PC-9 (cell line): ENCODE measurements at regions of chr15 and their contacts with region 1.

Region 1: DNA sequence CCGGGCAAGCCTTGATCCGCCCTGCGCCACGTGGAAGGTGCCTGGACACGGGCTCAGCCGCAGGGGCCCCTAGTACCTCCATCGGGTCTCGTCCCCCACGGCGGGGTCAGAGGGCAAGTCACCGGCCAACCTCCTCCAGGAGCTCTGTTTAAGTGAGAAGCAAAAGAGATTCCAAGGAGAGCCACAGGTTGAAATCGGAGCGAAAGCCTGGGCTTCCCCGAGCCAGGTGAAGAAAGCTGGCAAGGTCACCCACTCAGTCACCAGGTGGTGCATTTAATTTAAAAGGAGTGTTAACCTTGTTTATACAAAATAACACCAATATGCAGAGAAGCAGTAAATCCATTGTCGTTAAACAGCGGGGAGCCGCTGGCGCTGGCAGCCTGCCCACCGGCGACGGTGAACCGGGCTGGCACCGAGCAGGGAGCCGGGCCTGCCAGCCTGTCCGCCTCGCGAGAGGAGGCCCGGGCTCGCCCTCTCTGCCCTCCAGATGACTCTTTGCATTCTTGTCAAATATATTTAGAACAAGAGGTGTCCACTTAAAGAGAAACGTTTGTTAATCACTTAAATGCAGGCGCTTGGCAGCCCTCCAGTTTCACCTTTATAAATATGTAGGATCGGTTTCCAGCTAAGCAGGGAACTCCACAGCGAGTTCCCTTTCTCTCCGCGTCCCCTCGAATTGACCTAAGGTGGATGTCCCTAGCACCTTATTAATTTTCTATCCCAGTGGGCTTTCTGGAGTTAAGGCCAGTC is 277.3 kb upstream of the NR2F2 start:
- DNase-seq: peak; percentile 79 to 84
- H3K4me3 ChIP-seq: peak overlapping the region; percentile 68
- H3K27ac ChIP-seq: peak overlapping the region; percentile 92
- H3K4me1 ChIP-seq: peaks cover 53% of the 10 kb centered on the region
- H3K27me3 ChIP-seq: no peaks in the 10 kb centered on the region
- CTCF ChIP-seq: no peak

Region 2: GRCh38 chr15:95635666-95636065 is 417.5 kb before region 1 on chr15:
- CTCF ChIA-PET with region 1: interaction called, 11 read pairs
- POLR2A ChIA-PET with region 1: no interaction called
- intact Hi-C with region 1: no loop called
- DNase-seq: no peak
- H3K4me3 ChIP-seq: no peak overlapping the region
- H3K27ac ChIP-seq: peak overlapping the region; percentile 71
- H3K4me1 ChIP-seq: peaks cover 13% of the 10 kb centered on the region
- H3K27me3 ChIP-seq: no peaks in the 10 kb centered on the region
- CTCF ChIP-seq: no peak

Region 3: DNA sequence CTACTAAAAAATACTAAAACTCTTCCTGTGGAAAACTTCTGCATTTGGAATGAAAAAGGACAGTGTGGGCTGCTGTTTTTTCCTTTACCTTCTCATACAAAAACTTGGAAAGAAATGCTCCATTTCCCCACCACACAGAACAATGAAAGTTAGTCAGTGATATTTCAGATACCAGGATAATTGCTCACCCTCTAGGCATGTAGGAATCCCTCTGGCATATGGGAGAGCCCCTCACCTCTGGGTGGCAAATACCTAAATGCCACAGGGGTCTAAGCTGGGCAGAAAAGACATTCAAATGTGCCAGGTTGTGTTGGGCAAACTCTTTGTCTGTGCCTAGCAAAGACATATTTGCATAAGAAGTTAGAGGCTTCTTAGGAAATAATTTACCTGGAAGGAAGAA is 283.0 kb before region 1 on chr15:
- CTCF ChIA-PET with region 1: no interaction called
- POLR2A ChIA-PET with region 1: no interaction called
- intact Hi-C with region 1: loop called (anchors 10 kb)
- DNase-seq: peak; percentile 56 to 63
- H3K4me3 ChIP-seq: no peak overlapping the region
- H3K27ac ChIP-seq: no peak overlapping the region
- H3K4me1 ChIP-seq: no peaks in the 10 kb centered on the region; the same call in 1 of the 2 replicates
- H3K27me3 ChIP-seq: no peaks in the 10 kb centered on the region
- CTCF ChIP-seq: no peak

Region 4: DNA sequence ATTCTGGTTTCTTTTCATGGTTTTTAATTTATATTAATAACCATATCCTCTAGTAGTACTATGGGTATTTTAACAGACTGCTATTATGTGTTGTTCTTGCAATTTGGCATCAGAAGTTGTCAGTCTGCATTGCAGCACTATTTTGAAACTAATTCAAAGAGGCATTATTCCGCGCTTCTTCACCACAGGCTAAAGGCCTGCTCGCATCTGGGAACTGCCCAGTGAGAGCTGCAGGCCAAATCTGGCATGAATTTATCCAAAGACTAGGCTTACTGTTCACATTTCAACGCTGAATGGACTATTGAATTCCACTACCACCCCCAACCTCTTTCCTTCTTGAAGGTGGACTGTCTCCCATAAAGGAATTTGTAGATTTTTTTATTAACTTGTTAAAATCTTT is 33.1 kb before region 1 on chr15:
- CTCF ChIA-PET with region 1: no interaction called
- POLR2A ChIA-PET with region 1: no interaction called
- intact Hi-C with region 1: no loop called
- DNase-seq: no peak
- H3K4me3 ChIP-seq: no peak overlapping the region
- H3K27ac ChIP-seq: no peak overlapping the region
- H3K4me1 ChIP-seq: no peaks in the 10 kb centered on the region
- H3K27me3 ChIP-seq: no peaks in the 10 kb centered on the region
- CTCF ChIP-seq: no peak

Region 5: GRCh38 chr15:96170979-96171739 is 118.0 kb after region 1 on chr15:
- CTCF ChIA-PET with region 1: no interaction called
- POLR2A ChIA-PET with region 1: no interaction called
- intact Hi-C with region 1: loop called (anchors 5 kb)
- DNase-seq: peak in 1 of 2 experiments; percentile 14
- H3K4me3 ChIP-seq: no peak overlapping the region
- H3K27ac ChIP-seq: no peak overlapping the region
- H3K4me1 ChIP-seq: no peaks in the 10 kb centered on the region
- H3K27me3 ChIP-seq: no peaks in the 10 kb centered on the region
- CTCF ChIP-seq: no peak

Region 6: GRCh38 chr15:96234109-96234892 is 181.1 kb after region 1 on chr15:
- CTCF ChIA-PET with region 1: no interaction called
- POLR2A ChIA-PET with region 1: no interaction called
- intact Hi-C with region 1: loop called (anchors 5 kb)
- DNase-seq: peak in 1 of 2 experiments; percentile 42
- H3K4me3 ChIP-seq: no peak overlapping the region
- H3K27ac ChIP-seq: no peak overlapping the region
- H3K4me1 ChIP-seq: peaks cover 11% of the 10 kb centered on the region
- H3K27me3 ChIP-seq: no peaks in the 10 kb centered on the region
- CTCF ChIP-seq: no peak

Region 7: DNA sequence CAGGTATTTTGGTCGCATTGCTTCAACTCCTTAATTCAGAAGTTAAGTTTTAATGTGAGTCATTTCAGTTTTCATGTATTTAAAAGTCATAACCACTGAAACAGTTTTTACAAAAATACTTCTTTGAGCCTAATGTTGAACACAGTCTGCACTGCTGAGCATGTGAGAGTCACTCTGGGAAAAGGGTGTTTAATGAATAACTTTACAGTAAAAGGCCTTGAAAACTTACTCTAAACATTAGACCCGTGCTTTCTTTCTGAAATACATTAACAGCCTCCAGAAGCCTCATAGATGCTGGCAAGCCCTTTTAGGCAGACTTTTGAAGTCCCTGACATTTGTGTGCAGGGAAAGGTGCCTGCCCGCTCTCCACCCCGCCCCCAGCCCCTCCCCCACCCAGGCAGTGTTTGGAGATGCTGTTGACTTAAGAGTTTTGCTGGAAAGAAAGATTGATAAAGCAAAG is 208.4 kb after region 1 on chr15:
- CTCF ChIA-PET with region 1: no interaction called
- POLR2A ChIA-PET with region 1: no interaction called
- intact Hi-C with region 1: loop called (anchors 2 kb)
- DNase-seq: no peak
- H3K4me3 ChIP-seq: no peak overlapping the region
- H3K27ac ChIP-seq: no peak overlapping the region
- H3K4me1 ChIP-seq: peaks cover 33% of the 10 kb centered on the region
- H3K27me3 ChIP-seq: no peaks in the 10 kb centered on the region
- CTCF ChIP-seq: no peak